Activated CD8-positive, alpha-beta T cell treated with anti-CD3 and anti-CD28 coated beads, Interleukin-2, amount 10 ng/mL, durations not matched to agents 7 days and 5 days (primary cell): ENCODE measurements at regions of chr4 and their contacts with region 1.

Region 1: DNA sequence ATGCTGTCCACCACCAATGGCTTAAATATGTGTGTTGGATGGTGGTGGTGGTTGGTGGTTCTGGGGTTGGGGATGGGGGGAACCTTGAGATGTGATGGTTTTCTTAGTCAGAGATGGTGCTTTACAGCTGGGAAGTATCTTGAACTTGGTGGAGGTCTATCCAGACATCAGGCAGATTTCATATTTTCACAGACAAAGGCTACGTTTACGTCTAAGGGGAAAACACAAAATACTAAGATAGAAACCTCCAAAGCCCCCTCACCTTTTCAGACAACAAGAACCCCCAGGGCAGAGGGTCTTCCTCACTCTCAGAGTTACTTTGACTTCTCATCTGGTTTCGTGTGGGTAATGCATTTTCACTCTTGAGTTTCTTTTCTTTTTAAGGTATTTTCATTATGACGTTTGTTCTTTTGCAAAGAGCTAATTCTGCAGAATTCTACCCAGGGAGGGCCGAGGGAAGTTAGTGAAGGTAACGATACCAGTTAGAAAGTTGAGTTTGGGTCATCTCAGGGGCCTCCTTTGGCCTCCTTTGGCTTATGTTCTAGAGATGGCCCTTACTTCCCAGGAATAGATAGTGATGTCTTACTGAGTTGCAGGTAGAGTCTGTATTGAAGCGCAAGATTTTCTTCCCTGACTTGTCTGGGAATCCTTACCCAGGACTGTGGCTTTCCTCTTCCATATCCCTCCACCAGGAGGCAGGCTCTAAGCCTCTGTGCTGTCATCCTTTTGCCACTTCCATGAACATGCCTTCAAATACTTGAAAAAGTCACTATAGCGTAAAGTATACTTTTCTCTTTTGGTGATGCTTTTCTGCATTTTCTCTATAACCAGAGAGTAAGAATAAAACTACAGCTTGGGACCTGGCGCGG is 31.9 kb downstream of the RHOH start:
- DNase-seq: peak; percentile 56
- ATAC-seq: no peak
- H3K4me3 Mint-ChIP-seq: peak overlapping the region; percentile 64
- H3K27ac Mint-ChIP-seq: peak overlapping the region; percentile 84
- H3K4me1 Mint-ChIP-seq: peaks cover 95% of the 10 kb centered on the region
- H3K27me3 Mint-ChIP-seq: no peaks in the 10 kb centered on the region

Region 2: GRCh38 chr4:40140196-40140595 is 88.5 kb before region 1 on chr4:
- CTCF ChIA-PET with region 1: no interaction called
- POLR2A ChIA-PET with region 1: no interaction called
- DNase-seq: no peak
- ATAC-seq: no peak
- H3K4me3 Mint-ChIP-seq: no peak overlapping the region
- H3K27ac Mint-ChIP-seq: no peak overlapping the region
- H3K4me1 Mint-ChIP-seq: no peaks in the 10 kb centered on the region
- H3K27me3 Mint-ChIP-seq: no peaks in the 10 kb centered on the region

Region 3: GRCh38 chr4:40212674-40213527 is 15.8 kb before region 1 on chr4:
- CTCF ChIA-PET with region 1: interaction called, 36 read pairs
- POLR2A ChIA-PET with region 1: interaction called, 17 read pairs
- DNase-seq: peak; percentile 33
- ATAC-seq: peak; percentile 25
- H3K4me3 Mint-ChIP-seq: peak overlapping the region; percentile 68
- H3K27ac Mint-ChIP-seq: peak overlapping the region; percentile 86
- H3K4me1 Mint-ChIP-seq: peaks cover 90% of the 10 kb centered on the region
- H3K27me3 Mint-ChIP-seq: no peaks in the 10 kb centered on the region

Region 4: GRCh38 chr4:40238700-40239548 is 10.2 kb after region 1 on chr4:
- CTCF ChIA-PET with region 1: interaction called, 37 read pairs
- POLR2A ChIA-PET with region 1: interaction called, 12 read pairs
- DNase-seq: peak; percentile 92
- ATAC-seq: peak; percentile 91
- H3K4me3 Mint-ChIP-seq: peak overlapping the region; percentile 71
- H3K27ac Mint-ChIP-seq: peak overlapping the region; percentile 96
- H3K4me1 Mint-ChIP-seq: peaks cover 89% of the 10 kb centered on the region
- H3K27me3 Mint-ChIP-seq: no peaks in the 10 kb centered on the region

Region 5: DNA sequence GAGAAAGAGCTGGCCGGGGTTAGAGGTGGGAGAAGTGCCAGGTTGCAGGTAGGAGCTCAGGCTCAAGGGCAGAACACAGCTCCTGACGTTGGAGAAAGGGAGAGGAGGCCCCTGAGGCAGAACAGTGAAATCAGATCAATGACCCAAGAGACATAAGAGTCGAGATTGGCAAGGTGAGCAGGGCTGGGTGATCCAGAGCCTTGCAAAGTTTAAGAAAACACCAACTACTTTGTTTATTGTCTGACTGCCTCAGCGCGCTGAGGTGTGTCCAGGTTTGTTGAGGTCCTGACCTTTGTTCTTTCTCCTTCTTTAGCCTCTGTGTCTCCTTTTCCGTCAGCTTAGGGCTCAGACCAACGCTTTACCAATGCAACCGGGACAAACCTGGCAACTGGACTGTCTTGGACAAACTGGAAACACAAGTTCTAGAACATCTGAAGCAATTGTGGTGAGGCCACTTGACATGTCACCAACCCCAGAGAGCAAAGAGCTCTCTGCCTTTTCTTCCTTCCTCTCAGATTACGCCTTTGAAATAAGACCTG is 134.7 kb after region 1 on chr4:
- CTCF ChIA-PET with region 1: no interaction called
- POLR2A ChIA-PET with region 1: no interaction called
- DNase-seq: no peak
- ATAC-seq: no peak
- H3K4me3 Mint-ChIP-seq: no peak overlapping the region
- H3K27ac Mint-ChIP-seq: no peak overlapping the region
- H3K4me1 Mint-ChIP-seq: no peaks in the 10 kb centered on the region
- H3K27me3 Mint-ChIP-seq: peaks cover 2% of the 10 kb centered on the region